Caco-2 (cell line): ENCODE measurements at regions of chr4 and their contacts with region 1.

Region 1: GRCh38 chr4:37452952-37453280 is 208.4 kb downstream of the NWD2 start:
- DNase-seq: peak; percentile 80 to 83
- H3K4me3 ChIP-seq: peak overlapping the region; percentile 61
- H3K4me3 Mint-ChIP-seq: peak overlapping the region; percentile 89
- H3K27ac Mint-ChIP-seq: peak overlapping the region; percentile 24
- H3K4me1 ChIP-seq: peaks cover 19% of the 10 kb centered on the region
- H3K4me1 Mint-ChIP-seq: peaks cover 21% of the 10 kb centered on the region
- H3K27me3 ChIP-seq: no peaks in the 10 kb centered on the region
- H3K27me3 Mint-ChIP-seq: no peaks in the 10 kb centered on the region
- CTCF ChIP-seq: peak; percentile 46 to 71

Region 2: GRCh38 chr4:37165844-37166243 is 287.1 kb before region 1 on chr4:
- CTCF ChIA-PET with region 1: no interaction called
- POLR2A ChIA-PET with region 1: no interaction called
- intact Hi-C with region 1: no loop called
- DNase-seq: no peak
- H3K4me3 ChIP-seq: no peak overlapping the region
- H3K4me3 Mint-ChIP-seq: no peak overlapping the region
- H3K27ac Mint-ChIP-seq: no peak overlapping the region
- H3K4me1 ChIP-seq: no peaks in the 10 kb centered on the region
- H3K4me1 Mint-ChIP-seq: no peaks in the 10 kb centered on the region
- H3K27me3 ChIP-seq: no peaks in the 10 kb centered on the region
- H3K27me3 Mint-ChIP-seq: peaks cover 3% of the 10 kb centered on the region
- CTCF ChIP-seq: no peak

Region 3: DNA sequence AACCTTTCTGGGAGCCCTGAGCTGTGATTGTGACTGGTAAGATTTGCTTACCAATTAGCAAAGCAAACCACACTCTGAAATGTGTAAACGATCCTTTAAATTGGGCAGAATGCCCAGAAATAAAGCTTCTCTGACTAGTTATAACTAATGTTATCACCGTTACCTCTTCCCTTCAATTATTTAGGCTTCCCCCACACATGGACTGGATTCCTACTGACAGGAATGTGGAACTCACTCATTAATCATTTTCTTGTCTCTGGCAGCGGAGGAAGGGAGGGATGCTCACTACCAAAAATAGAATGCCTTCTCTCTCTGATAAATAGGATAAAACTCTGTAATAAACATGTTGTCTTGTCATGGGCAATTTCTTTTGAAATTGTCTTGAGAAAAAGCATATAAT is 233.7 kb before region 1 on chr4:
- CTCF ChIA-PET with region 1: no interaction called
- POLR2A ChIA-PET with region 1: no interaction called
- intact Hi-C with region 1: no loop called
- DNase-seq: no peak
- H3K4me3 ChIP-seq: no peak overlapping the region
- H3K4me3 Mint-ChIP-seq: no peak overlapping the region
- H3K27ac Mint-ChIP-seq: no peak overlapping the region
- H3K4me1 ChIP-seq: no peaks in the 10 kb centered on the region
- H3K4me1 Mint-ChIP-seq: no peaks in the 10 kb centered on the region
- H3K27me3 ChIP-seq: no peaks in the 10 kb centered on the region; the same call in 1 of the 2 replicates
- H3K27me3 Mint-ChIP-seq: peaks cover 4% of the 10 kb centered on the region
- CTCF ChIP-seq: no peak

Region 4: DNA sequence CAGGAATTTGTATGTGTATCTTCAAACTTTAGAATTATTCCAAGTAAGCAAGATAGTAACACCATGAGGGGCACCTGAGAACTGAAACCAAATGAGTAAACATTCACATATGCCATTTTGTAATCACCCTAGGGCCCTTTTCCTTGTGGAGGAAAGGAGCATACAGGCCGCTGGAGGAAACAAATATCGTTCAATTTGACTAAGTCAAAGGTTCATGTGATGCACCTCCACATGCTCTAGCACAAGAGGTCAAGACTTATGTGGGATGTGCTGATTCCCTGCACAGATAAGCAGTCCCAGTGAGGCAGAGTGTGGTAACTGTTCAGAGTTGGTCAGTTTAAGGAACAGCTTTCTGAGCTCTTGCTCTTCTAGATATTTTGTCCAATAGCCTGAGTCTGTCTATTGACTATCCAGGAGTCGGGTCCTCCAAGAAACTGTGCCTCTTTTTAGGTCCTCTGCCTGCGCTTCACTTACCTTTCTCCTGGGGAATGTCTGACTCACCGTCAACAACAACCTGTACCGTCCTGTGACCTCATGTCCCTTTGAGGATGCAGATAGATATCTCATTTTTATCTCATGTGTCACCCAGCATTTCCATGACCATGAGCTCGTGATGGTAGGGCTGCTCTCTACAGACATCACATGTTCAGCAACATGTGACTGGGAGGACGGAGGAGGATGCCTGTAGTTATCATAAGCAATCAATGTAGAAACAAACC is 11.5 kb before region 1 on chr4:
- CTCF ChIA-PET with region 1: interaction called, 34 read pairs
- POLR2A ChIA-PET with region 1: interaction called, 14 read pairs
- intact Hi-C with region 1: loop called (anchors 1 kb)
- DNase-seq: peak; percentile 79 to 91
- H3K4me3 ChIP-seq: no peak overlapping the region
- H3K4me3 Mint-ChIP-seq: peak overlapping the region; percentile 42
- H3K27ac Mint-ChIP-seq: peak overlapping the region; percentile 88
- H3K4me1 ChIP-seq: peaks cover 55% of the 10 kb centered on the region
- H3K4me1 Mint-ChIP-seq: peaks cover 32% of the 10 kb centered on the region
- H3K27me3 ChIP-seq: no peaks in the 10 kb centered on the region
- H3K27me3 Mint-ChIP-seq: no peaks in the 10 kb centered on the region
- CTCF ChIP-seq: no peak

Region 5: DNA sequence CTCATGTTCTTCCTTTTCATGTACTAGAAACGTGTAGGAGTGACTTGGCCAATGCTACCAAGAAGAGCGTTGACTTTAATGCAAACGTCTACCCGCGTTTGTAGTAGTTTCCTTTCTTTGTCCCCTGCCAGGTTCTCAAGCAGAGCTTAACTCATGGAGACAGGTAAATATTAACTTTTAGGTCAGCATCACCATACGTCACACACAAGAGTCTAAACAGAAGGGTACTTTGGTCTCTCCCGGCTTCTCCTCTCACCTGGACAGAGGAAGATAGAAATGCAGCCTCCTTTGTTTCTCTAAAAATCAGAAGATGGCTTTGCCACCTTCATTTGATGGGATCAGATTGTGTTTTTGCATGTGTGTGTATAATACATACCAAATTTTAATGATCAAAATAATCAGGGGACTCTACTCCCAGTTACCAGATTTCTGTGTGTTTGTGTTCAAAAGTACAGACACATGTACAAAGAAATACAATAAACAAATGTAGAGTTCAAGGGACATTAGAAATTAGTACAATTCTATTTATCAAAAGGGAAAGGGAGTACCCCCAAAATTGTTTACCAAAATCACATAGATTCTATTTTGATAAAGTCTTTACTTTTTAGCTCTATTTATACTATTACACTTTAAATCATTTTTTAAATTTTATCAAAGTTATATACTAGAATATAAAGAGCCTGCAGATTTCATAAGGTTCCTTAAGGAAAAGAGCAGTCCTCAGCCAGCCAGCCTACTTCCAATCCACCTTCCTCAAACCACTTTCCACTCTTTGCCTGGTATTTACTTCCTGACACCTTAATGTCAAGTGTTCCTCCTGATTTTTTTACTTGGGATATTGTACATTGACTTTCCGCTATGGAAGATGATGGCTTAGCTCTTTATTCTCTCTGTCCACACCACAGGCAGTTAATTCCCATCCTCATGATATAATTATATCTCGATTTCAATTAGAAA is 37.8 kb after region 1 on chr4:
- CTCF ChIA-PET with region 1: interaction called, 12 read pairs
- POLR2A ChIA-PET with region 1: no interaction called
- intact Hi-C with region 1: loop called (anchors 1 kb)
- DNase-seq: peak in 1 of 2 experiments; percentile 57
- H3K4me3 ChIP-seq: peak overlapping the region; percentile 22
- H3K4me3 Mint-ChIP-seq: peak overlapping the region; percentile 70
- H3K27ac Mint-ChIP-seq: peak overlapping the region; percentile 85
- H3K4me1 ChIP-seq: peaks cover 24% of the 10 kb centered on the region
- H3K4me1 Mint-ChIP-seq: peaks cover 26% of the 10 kb centered on the region
- H3K27me3 ChIP-seq: no peaks in the 10 kb centered on the region
- H3K27me3 Mint-ChIP-seq: no peaks in the 10 kb centered on the region
- CTCF ChIP-seq: no peak

Region 6: GRCh38 chr4:37542706-37543105 is 89.8 kb after region 1 on chr4:
- CTCF ChIA-PET with region 1: interaction called, 6 read pairs
- POLR2A ChIA-PET with region 1: no interaction called
- intact Hi-C with region 1: loop called (anchors 1 kb)
- DNase-seq: no peak
- H3K4me3 ChIP-seq: no peak overlapping the region
- H3K4me3 Mint-ChIP-seq: peak overlapping the region; percentile 3
- H3K27ac Mint-ChIP-seq: peak overlapping the region; percentile 13
- H3K4me1 ChIP-seq: peaks cover 60% of the 10 kb centered on the region
- H3K4me1 Mint-ChIP-seq: peaks cover 33% of the 10 kb centered on the region
- H3K27me3 ChIP-seq: no peaks in the 10 kb centered on the region
- H3K27me3 Mint-ChIP-seq: no peaks in the 10 kb centered on the region
- CTCF ChIP-seq: no peak

Region 7: DNA sequence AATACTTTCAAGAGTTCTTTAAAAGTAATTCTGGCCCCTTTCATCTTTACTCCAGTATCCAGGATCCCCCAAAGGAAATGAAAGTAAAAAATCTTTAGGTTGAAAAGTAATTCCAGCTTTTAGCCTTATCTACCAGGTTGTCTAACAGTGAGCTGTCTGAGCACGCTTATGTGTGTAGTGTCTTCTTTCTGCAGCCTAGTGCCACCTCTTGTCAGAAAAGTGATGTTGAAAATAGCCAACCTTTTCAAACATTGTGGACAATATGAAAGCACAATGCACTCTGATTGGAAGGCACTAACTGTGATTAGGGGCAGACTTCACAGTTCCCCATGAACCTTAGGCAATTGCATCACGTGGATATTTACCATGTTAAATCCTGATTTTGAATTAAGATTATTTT is 141.2 kb after region 1 on chr4:
- CTCF ChIA-PET with region 1: interaction called, 21 read pairs
- POLR2A ChIA-PET with region 1: no interaction called
- intact Hi-C with region 1: loop called (anchors 1 kb)
- DNase-seq: no peak
- H3K4me3 ChIP-seq: no peak overlapping the region
- H3K4me3 Mint-ChIP-seq: no peak overlapping the region
- H3K27ac Mint-ChIP-seq: no peak overlapping the region
- H3K4me1 ChIP-seq: peaks cover 39% of the 10 kb centered on the region
- H3K4me1 Mint-ChIP-seq: peaks cover 26% of the 10 kb centered on the region
- H3K27me3 ChIP-seq: no peaks in the 10 kb centered on the region
- H3K27me3 Mint-ChIP-seq: no peaks in the 10 kb centered on the region
- CTCF ChIP-seq: peak in 1 of 2 experiments; percentile 19

Region 8: DNA sequence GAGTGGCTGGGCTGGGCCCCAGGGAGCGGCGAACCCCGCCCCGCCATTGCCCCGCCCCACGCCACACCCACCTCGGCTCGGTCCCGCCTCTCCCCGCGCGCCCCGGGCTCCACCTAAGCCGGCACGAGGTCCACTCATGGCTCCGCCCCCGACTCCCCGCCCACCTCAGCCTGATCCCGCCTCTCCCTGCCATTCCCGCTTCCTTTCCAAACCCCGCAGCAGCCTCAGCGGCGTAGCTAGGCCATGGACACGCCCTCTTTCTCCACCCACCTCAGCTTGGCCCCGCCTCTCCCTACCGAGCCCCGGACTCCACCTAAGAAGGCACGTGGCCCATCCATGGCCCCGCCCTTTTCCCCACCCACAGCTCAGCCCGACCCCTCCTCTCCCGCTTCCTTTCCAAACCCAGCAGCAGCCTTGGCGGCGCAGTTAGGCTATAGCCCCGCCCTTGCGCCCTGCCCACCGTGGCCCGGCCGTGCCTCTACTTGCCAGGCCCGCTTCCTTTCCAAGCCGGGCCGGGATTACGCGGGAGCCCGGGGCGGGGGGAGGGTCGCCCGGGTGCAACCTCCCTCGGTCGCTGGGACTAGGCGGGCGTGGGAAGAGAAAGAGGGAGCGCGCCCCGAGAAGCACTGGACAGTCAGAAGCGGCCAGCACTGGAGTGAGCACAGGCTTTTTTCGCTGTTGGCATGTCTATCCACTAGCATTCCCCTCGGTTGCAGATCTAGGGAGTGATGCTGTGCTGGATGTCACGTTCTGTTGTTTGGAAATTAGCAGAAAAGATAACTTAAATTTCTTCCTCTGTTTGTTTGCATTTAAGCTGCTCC is 233.7 kb after region 1 on chr4 and contains the start of gene RELL1:
- CTCF ChIA-PET with region 1: interaction called, 9 read pairs
- POLR2A ChIA-PET with region 1: no interaction called
- intact Hi-C with region 1: loop called (anchors 1 kb)
- DNase-seq: peak; percentile 99 to 100
- H3K4me3 ChIP-seq: peak within 1 kb of the TSS; percentile 70
- H3K4me3 Mint-ChIP-seq: peak within 1 kb of the TSS; percentile 75
- H3K27ac Mint-ChIP-seq: peak within 1 kb of the TSS; percentile 86
- H3K4me1 ChIP-seq: peaks cover 32% of the 10 kb centered on the region
- H3K4me1 Mint-ChIP-seq: peaks cover 13% of the 10 kb centered on the region
- H3K27me3 ChIP-seq: no peaks in the 10 kb centered on the region
- H3K27me3 Mint-ChIP-seq: no peaks in the 10 kb centered on the region
- CTCF ChIP-seq: no peak
- total RNA-seq, gene RELL1: 45.3 and 48.5 TPM in 2 replicates

Region 9: DNA sequence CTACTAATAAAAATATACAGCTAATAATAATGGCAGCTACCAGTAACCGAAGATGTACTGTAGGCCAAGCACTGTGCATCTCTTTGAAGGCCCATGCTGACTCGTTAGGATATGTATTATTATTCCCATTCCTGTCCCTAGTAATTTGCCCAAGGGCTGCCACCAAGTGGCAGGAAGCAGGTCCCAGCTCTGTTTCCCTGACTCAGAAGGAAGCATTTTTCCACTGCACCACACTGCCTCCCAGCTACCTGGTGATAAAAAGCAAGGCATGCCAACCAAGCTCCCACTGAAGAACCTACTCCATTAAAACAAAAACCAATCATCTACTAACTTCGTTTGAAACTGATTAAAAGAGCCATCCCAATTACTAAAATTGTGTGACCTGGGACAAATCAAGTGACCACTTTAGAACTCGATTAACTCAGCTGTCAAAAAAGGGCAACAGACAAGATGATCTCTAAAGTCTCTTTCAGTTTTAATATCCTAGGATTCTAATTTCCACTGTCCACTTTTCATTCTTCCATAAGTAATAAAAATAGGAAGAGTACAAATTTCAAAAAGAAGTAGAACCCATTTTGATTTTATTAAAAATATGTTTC is 349.3 kb after region 1 on chr4:
- CTCF ChIA-PET with region 1: interaction called, 13 read pairs
- POLR2A ChIA-PET with region 1: no interaction called
- intact Hi-C with region 1: loop called (anchors 1 kb)
- DNase-seq: peak; percentile 73 to 77
- H3K4me3 ChIP-seq: no peak overlapping the region
- H3K4me3 Mint-ChIP-seq: no peak overlapping the region
- H3K27ac Mint-ChIP-seq: no peak overlapping the region
- H3K4me1 ChIP-seq: no peaks in the 10 kb centered on the region
- H3K4me1 Mint-ChIP-seq: peaks cover 18% of the 10 kb centered on the region
- H3K27me3 ChIP-seq: no peaks in the 10 kb centered on the region
- H3K27me3 Mint-ChIP-seq: no peaks in the 10 kb centered on the region
- CTCF ChIP-seq: peak; percentile 59 to 80

Region 10: GRCh38 chr4:37852376-37852775 is 399.5 kb after region 1 on chr4:
- CTCF ChIA-PET with region 1: no interaction called
- POLR2A ChIA-PET with region 1: no interaction called
- intact Hi-C with region 1: no loop called
- DNase-seq: no peak
- H3K4me3 ChIP-seq: no peak overlapping the region
- H3K4me3 Mint-ChIP-seq: no peak overlapping the region
- H3K27ac Mint-ChIP-seq: no peak overlapping the region
- H3K4me1 ChIP-seq: no peaks in the 10 kb centered on the region
- H3K4me1 Mint-ChIP-seq: no peaks in the 10 kb centered on the region
- H3K27me3 ChIP-seq: no peaks in the 10 kb centered on the region
- H3K27me3 Mint-ChIP-seq: no peaks in the 10 kb centered on the region
- CTCF ChIP-seq: no peak